GM12878 (cell line): ENCODE measurements at regions of chr16 and their contacts with region 1.

Region 1: GRCh38 chr16:68040507-68041288 is 17.6 kb downstream of the DUS2 start:
- DNase-seq: peak; percentile 47
- ATAC-seq: peak; percentile 97
- H3K4me3 ChIP-seq: no peak overlapping the region
- H3K27ac ChIP-seq: peak overlapping the region; percentile 4; the same call in 1 of the 2 replicates
- H3K4me1 ChIP-seq: peaks cover 17% of the 10 kb centered on the region
- H3K27me3 ChIP-seq: no peaks in the 10 kb centered on the region
- CTCF ChIP-seq: peak; percentile 87 to 96 (median 93)
- EP300 ChIP-seq: no peak
- POLR2A ChIP-seq: no peak
- RAD21 ChIP-seq: peak; percentile 95

Region 2: GRCh38 chr16:67883872-67884261 is 156.8 kb before region 1 on chr16:
- CTCF ChIA-PET with region 1: interaction called, 24 read pairs
- POLR2A ChIA-PET with region 1: no interaction called
- RAD21 ChIA-PET with region 1: interaction called, 14 read pairs
- SMC1A ChIA-PET with region 1: interaction called, 10 read pairs
- in situ Hi-C with region 1: loop called (anchors 5 kb)
- intact Hi-C with region 1: loop called (anchors 2 kb)
- DNase-seq: no peak
- ATAC-seq: peak; percentile 93
- H3K4me3 ChIP-seq: no peak overlapping the region
- H3K27ac ChIP-seq: no peak overlapping the region
- H3K4me1 ChIP-seq: no peaks in the 10 kb centered on the region
- H3K27me3 ChIP-seq: no peaks in the 10 kb centered on the region
- CTCF ChIP-seq: peak; percentile 86 to 92 (median 90)
- EP300 ChIP-seq: no peak
- POLR2A ChIP-seq: no peak
- RAD21 ChIP-seq: peak; percentile 70

Region 3: DNA sequence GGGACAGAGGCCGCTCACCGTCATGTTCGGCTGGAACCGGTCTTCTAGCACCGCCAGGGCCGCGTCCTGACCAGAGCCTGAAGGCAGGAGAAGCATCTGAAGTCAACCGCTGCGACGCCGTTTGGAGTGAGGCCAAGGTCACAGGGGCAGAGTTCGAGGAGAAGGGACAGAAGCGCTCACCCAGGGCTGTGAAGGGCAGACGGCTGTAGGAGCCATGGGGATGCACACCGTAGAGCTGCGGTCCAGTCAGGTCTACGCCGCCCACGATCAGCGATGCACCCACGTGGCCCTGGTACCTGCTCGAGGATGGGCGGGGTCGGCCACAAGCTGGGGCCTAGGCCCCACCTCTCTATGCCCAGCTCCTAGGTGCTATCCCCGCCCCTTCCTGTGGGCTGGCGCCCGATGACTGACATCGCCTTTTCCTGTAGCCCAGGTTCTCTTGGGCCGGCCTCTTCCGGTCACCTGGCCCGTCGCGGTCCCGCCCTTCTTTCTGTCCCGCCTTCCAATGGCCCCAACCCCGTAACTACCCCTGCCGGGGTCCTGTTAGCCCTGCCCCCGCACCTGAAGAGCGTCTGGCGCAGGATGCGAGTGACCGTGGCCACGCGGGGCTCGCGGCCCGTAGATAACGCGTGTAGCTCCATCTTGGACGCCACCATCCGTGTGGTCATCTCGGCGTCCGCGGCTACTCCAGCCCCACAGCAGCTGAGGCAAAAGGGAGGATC is 105.1 kb before region 1 on chr16:
- CTCF ChIA-PET with region 1: interaction called, 15 read pairs
- POLR2A ChIA-PET with region 1: interaction called, 4 read pairs
- RAD21 ChIA-PET with region 1: interaction called, 5 read pairs
- SMC1A ChIA-PET with region 1: interaction called, 6 read pairs
- in situ Hi-C with region 1: no loop called
- intact Hi-C with region 1: loop called (anchors 5 kb)
- DNase-seq: peak; percentile 84
- ATAC-seq: peak; percentile 94
- H3K4me3 ChIP-seq: peak overlapping the region; percentile 89
- H3K27ac ChIP-seq: peak overlapping the region; percentile 98
- H3K4me1 ChIP-seq: peaks cover 12% of the 10 kb centered on the region
- H3K27me3 ChIP-seq: no peaks in the 10 kb centered on the region
- CTCF ChIP-seq: no peak
- EP300 ChIP-seq: no peak
- POLR2A ChIP-seq: peak; percentile 91
- RAD21 ChIP-seq: no peak

Region 4: DNA sequence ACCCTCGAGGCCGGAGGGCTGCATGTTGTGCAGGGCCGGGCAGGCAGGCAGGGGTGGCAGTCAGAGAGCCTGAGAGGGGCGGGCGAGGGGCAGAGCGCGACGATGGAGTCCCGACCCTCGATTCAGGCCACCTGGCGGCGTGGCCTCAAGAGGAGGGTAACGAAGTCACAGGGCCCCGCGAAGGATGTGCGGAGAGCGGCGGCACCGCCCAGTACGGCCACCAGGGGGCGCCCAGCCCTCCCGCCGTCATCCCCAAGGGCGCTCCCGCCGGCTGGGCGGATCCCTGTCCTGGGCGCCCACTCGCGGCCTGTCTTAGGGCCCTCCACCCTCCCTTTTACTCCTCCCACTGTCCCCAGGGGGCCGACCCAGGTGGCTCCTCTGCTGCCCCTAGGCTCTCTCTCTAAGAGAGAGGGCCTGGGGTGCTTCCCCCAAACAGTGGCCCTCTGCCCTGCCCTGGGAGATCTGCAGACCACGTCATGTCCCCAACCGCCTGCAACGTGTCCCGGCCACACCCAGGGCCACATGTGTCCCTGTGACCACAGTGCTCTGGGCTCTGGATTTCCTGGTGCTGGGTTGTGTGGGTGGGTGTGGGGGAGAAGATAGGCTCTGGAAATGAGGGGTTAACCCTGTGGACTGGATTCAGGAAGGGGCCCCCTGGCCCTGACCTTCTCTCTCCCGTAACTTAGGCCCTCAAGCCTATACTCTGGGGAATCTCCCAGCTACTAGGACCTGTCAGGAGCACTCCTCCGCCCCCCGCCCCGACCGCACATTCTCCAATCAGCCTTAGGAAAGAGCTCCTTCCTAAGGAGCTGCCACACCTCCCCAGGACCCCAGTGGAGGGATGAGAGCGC is 47.3 kb before region 1 on chr16:
- CTCF ChIA-PET with region 1: interaction called, 23 read pairs
- POLR2A ChIA-PET with region 1: no interaction called
- RAD21 ChIA-PET with region 1: interaction called, 6 read pairs
- SMC1A ChIA-PET with region 1: interaction called, 11 read pairs
- in situ Hi-C with region 1: no loop called
- intact Hi-C with region 1: loop called (anchors 1 kb)
- DNase-seq: no peak
- ATAC-seq: peak; percentile 92
- H3K4me3 ChIP-seq: peak overlapping the region; percentile 24; the same call in 1 of the 2 replicates
- H3K27ac ChIP-seq: peak overlapping the region; percentile 64
- H3K4me1 ChIP-seq: peaks cover 39% of the 10 kb centered on the region
- H3K27me3 ChIP-seq: no peaks in the 10 kb centered on the region
- CTCF ChIP-seq: peak; percentile 92 to 95 (median 94)
- EP300 ChIP-seq: no peak
- POLR2A ChIP-seq: peak; percentile 70
- RAD21 ChIP-seq: peak; percentile 52

Region 5: GRCh38 chr16:68022704-68023522 is 17.8 kb before region 1 on chr16 and contains the starts of genes DDX28 and DUS2:
- CTCF ChIA-PET with region 1: interaction called, 14 read pairs
- POLR2A ChIA-PET with region 1: no interaction called
- RAD21 ChIA-PET with region 1: interaction called, 7 read pairs
- SMC1A ChIA-PET with region 1: interaction called, 9 read pairs
- in situ Hi-C with region 1: no loop called
- intact Hi-C with region 1: no loop called
- DNase-seq: peak; percentile 83
- ATAC-seq: peak; percentile 94
- H3K4me3 ChIP-seq: peak within 1 kb of the TSS; percentile 99
- H3K27ac ChIP-seq: peak within 1 kb of the TSS; percentile 87
- H3K4me1 ChIP-seq: peaks cover 11% of the 10 kb centered on the region
- H3K27me3 ChIP-seq: no peaks in the 10 kb centered on the region
- CTCF ChIP-seq: peak in 1 of 3 experiments; percentile 16; a peak in 1 of 6 replicates
- EP300 ChIP-seq: no peak
- POLR2A ChIP-seq: peak; percentile 97
- RAD21 ChIP-seq: no peak
- polyA plus RNA-seq, gene DDX28: 3.6 to 7.2 TPM
- polyA plus RNA-seq, gene DUS2: 4.8 to 7.8 TPM

Region 6: GRCh38 chr16:68064791-68065365 is 24.2 kb after region 1 on chr16:
- CTCF ChIA-PET with region 1: interaction called, 18 read pairs
- POLR2A ChIA-PET with region 1: no interaction called
- RAD21 ChIA-PET with region 1: interaction called, 4 read pairs
- SMC1A ChIA-PET with region 1: interaction called, 3 read pairs
- in situ Hi-C with region 1: no loop called
- intact Hi-C with region 1: no loop called
- DNase-seq: no peak
- ATAC-seq: peak; percentile 98
- H3K4me3 ChIP-seq: no peak overlapping the region
- H3K27ac ChIP-seq: no peak overlapping the region
- H3K4me1 ChIP-seq: peaks cover 4% of the 10 kb centered on the region; the same call in 1 of the 2 replicates
- H3K27me3 ChIP-seq: no peaks in the 10 kb centered on the region
- CTCF ChIP-seq: peak; percentile 87 to 88 (median 87)
- EP300 ChIP-seq: no peak
- POLR2A ChIP-seq: no peak
- RAD21 ChIP-seq: peak; percentile 70

Region 7: DNA sequence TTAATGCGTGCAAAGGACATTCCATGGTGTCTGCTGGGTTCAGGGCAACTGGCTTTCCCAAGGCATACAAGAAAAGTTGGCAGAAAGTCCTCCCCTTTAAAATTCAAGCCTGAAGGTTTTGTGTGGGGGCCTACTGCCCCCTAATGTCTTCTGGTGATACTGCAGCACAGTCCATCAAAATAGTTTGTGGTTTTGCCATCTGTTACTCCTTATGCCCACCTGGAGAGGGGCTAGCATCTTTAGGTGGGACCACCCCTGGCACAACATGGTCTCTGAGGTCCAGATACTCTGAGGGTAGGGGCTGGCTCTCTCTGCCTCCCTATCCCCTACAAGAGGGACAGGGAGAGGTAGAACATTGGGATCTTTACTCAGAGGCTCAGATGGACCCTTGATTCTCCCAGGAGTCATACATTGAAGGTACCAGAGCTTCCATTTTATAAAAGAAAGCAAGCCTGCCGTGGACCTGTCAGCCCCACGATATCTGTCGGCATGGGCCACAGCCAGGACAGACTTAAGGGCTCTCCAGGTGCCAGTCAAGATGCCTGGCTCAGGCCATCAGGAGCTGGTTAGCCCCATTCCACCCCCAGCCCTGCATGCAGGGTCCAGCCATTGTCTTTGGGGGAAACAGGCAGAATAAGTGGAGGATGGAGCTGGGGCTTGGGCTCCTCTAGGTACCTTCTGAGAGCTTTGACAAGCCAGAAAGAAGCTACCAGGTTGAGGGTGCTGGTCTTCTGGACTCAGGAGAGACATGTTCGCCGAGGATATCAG is 188.9 kb after region 1 on chr16:
- CTCF ChIA-PET with region 1: interaction called, 17 read pairs
- POLR2A ChIA-PET with region 1: no interaction called
- RAD21 ChIA-PET with region 1: interaction called, 6 read pairs
- SMC1A ChIA-PET with region 1: interaction called, 5 read pairs
- in situ Hi-C with region 1: no loop called
- intact Hi-C with region 1: loop called (anchors 1 kb)
- DNase-seq: no peak
- ATAC-seq: peak; percentile 47
- H3K4me3 ChIP-seq: no peak overlapping the region
- H3K27ac ChIP-seq: no peak overlapping the region
- H3K4me1 ChIP-seq: peaks cover 12% of the 10 kb centered on the region
- H3K27me3 ChIP-seq: no peaks in the 10 kb centered on the region
- CTCF ChIP-seq: peak; percentile 87 to 90 (median 88)
- EP300 ChIP-seq: no peak
- POLR2A ChIP-seq: no peak
- RAD21 ChIP-seq: peak; percentile 94